Calu3 (cell line): ENCODE measurements at regions of chr11 and their contacts with region 1.

Region 1: GRCh38 chr11:33970984-33971466 is 79.1 kb upstream of the LMO2 start:
- DNase-seq: peak; percentile 40
- H3K4me3 Mint-ChIP-seq: no peak overlapping the region
- H3K27ac Mint-ChIP-seq: no peak overlapping the region
- H3K4me1 Mint-ChIP-seq: no peaks in the 10 kb centered on the region
- H3K27me3 Mint-ChIP-seq: peaks cover 52% of the 10 kb centered on the region
- CTCF ChIP-seq: peak; percentile 56

Region 2: DNA sequence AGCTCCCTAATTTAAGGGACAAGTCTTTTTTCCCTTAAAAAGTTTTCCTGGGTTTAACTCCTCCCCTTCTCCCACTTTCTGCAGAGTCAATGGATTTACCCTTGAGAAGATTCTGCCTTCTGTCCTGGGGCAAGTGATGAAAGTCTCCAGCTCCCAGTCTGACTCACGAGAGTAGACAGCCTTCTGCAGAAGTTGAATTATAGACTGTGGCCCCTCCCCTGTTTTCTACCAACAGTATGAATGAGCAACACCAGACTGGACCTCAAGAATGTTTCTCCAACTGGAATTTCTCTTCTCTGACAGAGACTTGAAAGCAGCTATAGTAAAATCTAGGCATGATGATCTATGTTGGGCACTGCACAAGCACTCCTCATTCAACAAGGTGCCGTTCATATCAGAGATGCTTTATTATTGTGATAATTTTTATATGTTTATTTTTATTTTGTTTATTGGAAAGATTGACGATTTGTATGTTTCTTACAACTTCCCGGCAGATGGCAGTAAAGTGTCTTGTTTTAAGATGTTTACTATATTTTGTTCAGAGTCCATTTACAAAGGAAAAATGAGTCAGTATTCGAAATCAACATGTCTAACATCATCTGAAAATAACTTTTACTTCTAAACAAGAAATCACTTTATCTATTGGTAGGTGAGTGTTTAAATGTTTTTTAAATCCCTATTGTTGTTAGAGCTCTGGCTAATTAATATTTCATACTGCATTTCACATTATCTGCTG is 135.7 kb before region 1 on chr11:
- CTCF ChIA-PET with region 1: no interaction called
- intact Hi-C with region 1: loop called (anchors 1 kb)
- DNase-seq: no peak
- H3K4me3 Mint-ChIP-seq: no peak overlapping the region
- H3K27ac Mint-ChIP-seq: no peak overlapping the region
- H3K4me1 Mint-ChIP-seq: no peaks in the 10 kb centered on the region
- H3K27me3 Mint-ChIP-seq: peaks cover 48% of the 10 kb centered on the region
- CTCF ChIP-seq: peak; percentile 15

Region 3: GRCh38 chr11:33857933-33858371 is 113.1 kb before region 1 on chr11:
- CTCF ChIA-PET with region 1: no interaction called
- intact Hi-C with region 1: loop called (anchors 1 kb)
- DNase-seq: peak; percentile 78
- H3K4me3 Mint-ChIP-seq: no peak overlapping the region
- H3K27ac Mint-ChIP-seq: no peak overlapping the region
- H3K4me1 Mint-ChIP-seq: no peaks in the 10 kb centered on the region
- H3K27me3 Mint-ChIP-seq: peaks cover 88% of the 10 kb centered on the region
- CTCF ChIP-seq: peak; percentile 83